ENCODE measurements at regions of chr12 and their contacts with region 1.

Region 1: GRCh38 chr12:96456265-96456974 is 33.0 kb upstream of the CFAP54 start:
- DNase-seq: peak in 1 of 14 experiments; percentile 21
- ATAC-seq: no peak
- H3K4me3 ChIP-seq: no peak overlapping the region
- H3K4me3 Mint-ChIP-seq: no peak overlapping the region
- H3K27ac ChIP-seq: no peak overlapping the region
- H3K27ac Mint-ChIP-seq: no peak overlapping the region
- H3K4me1 ChIP-seq: no peaks in the 10 kb centered on the region
- H3K4me1 Mint-ChIP-seq: peaks cover 4% of the 10 kb centered on the region
- H3K27me3 ChIP-seq: no peaks in the 10 kb centered on the region
- H3K27me3 Mint-ChIP-seq: no peaks in the 10 kb centered on the region
- CTCF ChIP-seq: no peak

Region 2: DNA sequence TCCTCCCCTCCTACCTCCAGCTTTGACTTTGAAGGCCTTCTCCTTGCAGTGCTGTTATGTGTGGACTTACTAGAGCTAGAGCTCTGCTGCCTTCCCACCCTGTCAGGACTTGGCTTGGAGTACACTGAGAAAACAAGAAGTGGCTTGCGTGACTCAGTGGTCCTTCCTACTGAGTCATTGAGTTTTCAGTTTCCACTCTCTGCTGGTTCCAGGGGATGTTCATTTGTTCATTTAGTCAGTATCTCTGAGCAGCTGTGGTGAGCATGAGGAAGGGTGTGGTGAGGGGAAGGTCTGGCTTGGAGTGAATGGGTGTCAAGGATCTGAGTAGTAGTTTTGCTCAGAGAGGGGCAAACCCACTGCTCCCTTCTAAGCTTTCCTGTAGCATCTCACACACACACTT is 279.4 kb before region 1 on chr12:
- CTCF ChIA-PET with region 1: no interaction called
- POLR2A ChIA-PET with region 1: no interaction called
- intact Hi-C with region 1: no loop called
- DNase-seq: peak in 10 of 14 experiments; percentile 2 to 73 (median 32)
- ATAC-seq: peak; percentile 77
- H3K4me3 ChIP-seq: no peak overlapping the region
- H3K4me3 Mint-ChIP-seq: no peak overlapping the region
- H3K27ac ChIP-seq: peak overlapping the region in 1 of 2 donors; percentile 13
- H3K27ac Mint-ChIP-seq: peak overlapping the region; percentile 75
- H3K4me1 ChIP-seq: peaks cover 13% of the 10 kb centered on the region
- H3K4me1 Mint-ChIP-seq: peaks cover 11% of the 10 kb centered on the region
- H3K27me3 ChIP-seq: no peaks in the 10 kb centered on the region
- H3K27me3 Mint-ChIP-seq: no peaks in the 10 kb centered on the region
- CTCF ChIP-seq: no peak

Region 3: DNA sequence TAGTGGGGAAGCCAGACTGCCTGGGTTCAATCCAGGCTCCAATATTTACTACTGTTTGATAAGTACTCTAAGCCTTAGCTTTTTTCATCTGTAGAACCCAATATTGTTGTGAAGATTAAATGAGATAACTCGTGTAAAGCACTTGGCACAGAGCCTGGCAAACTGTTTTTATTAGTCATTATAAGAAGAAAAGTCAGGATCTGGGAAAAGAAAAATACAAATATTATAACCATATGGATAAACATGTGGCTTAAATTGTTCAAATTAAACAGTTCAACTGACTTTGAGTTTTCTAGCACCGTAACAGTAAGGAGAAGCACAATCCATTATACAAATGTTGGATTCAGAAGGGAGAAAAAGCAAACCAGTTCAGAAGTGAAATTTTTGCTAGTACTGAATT is 34.2 kb before region 1 on chr12:
- CTCF ChIA-PET with region 1: no interaction called
- POLR2A ChIA-PET with region 1: no interaction called
- intact Hi-C with region 1: no loop called
- DNase-seq: no peak
- ATAC-seq: no peak
- H3K4me3 ChIP-seq: no peak overlapping the region
- H3K4me3 Mint-ChIP-seq: no peak overlapping the region
- H3K27ac ChIP-seq: no peak overlapping the region
- H3K27ac Mint-ChIP-seq: no peak overlapping the region
- H3K4me1 ChIP-seq: peaks cover 12% of the 10 kb centered on the region
- H3K4me1 Mint-ChIP-seq: peaks cover 15% of the 10 kb centered on the region
- H3K27me3 ChIP-seq: no peaks in the 10 kb centered on the region
- H3K27me3 Mint-ChIP-seq: no peaks in the 10 kb centered on the region
- CTCF ChIP-seq: no peak

Region 4: GRCh38 chr12:96434107-96434506 is 22.3 kb before region 1 on chr12:
- CTCF ChIA-PET with region 1: no interaction called
- POLR2A ChIA-PET with region 1: no interaction called
- intact Hi-C with region 1: loop called in 1 of 2 experiments (anchors 2 kb)
- DNase-seq: peak; percentile 37 to 95 (median 57)
- ATAC-seq: peak; percentile 98
- H3K4me3 ChIP-seq: peak overlapping the region; percentile 6
- H3K4me3 Mint-ChIP-seq: peak overlapping the region; percentile 52
- H3K27ac ChIP-seq: peak overlapping the region; percentile 50 to 73
- H3K27ac Mint-ChIP-seq: peak overlapping the region; percentile 75
- H3K4me1 ChIP-seq: peaks cover 40% of the 10 kb centered on the region
- H3K4me1 Mint-ChIP-seq: peaks cover 26% of the 10 kb centered on the region
- H3K27me3 ChIP-seq: no peaks in the 10 kb centered on the region
- H3K27me3 Mint-ChIP-seq: no peaks in the 10 kb centered on the region
- CTCF ChIP-seq: no peak

Measured in CD4-positive, alpha-beta T cell (primary cell).